Right ventricle myocardium superior (tissue), 1 donor: ENCODE measurements at regions of chr3 and their contacts with region 1.

Region 1: GRCh38 chr3:132352541-132353143 is 35.4 kb downstream of the ACP3 start:
- DNase-seq: no peak
- ATAC-seq: peak; percentile 81

Region 2: GRCh38 chr3:132399054-132399929 is 46.6 kb after region 1 on chr3:
- intact Hi-C with region 1: loop called (anchors 5 kb)
- DNase-seq: no peak
- ATAC-seq: peak; percentile 60